Lower leg skin (tissue), 4 donors: ENCODE measurements at regions of chr7 and their contacts with region 1.

Region 1: GRCh38 chr7:22559829-22560489 is 60.0 kb upstream of the STEAP1B start:
- DNase-seq: peak in 1 of 2 donors; percentile 67
- H3K4me3 ChIP-seq: no peak overlapping the region
- CTCF ChIP-seq: peak in 1 of 3 donors; percentile 88
- POLR2A ChIP-seq: no peak

Region 2: GRCh38 chr7:22726345-22727185 is 166.6 kb after region 1 on chr7:
- intact Hi-C with region 1: loop called (anchors 10 kb)
- DNase-seq: peak; percentile 48 to 89
- H3K4me3 ChIP-seq: no peak overlapping the region
- CTCF ChIP-seq: no peak
- POLR2A ChIP-seq: no peak

Region 3: DNA sequence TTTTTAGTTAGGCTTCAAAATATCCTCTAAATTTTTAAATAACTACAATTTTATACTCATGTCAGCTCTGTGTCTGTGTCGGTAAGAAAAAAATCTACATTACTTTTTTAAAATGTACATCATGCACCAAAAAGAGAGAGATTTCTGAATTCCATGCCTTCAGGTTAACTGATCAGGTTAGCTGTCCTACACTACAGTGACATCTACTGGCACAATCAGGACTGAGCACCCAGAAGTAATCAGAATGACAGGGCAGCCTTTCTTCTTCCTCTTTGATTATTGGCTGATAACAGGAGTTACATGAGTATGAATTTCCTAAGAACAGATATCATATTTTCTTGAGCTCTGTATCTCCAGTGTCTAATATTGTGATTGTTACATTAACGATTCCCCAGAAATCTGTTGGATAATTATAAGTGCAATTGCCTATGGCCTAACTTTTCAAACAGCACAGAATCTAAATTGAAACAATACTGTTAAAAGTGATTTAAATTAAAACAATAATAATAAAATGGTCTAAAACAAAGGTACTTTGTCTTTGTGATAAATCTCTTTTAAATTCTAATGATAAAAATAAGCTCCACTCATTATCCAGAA is 495.7 kb after region 1 on chr7:
- intact Hi-C with region 1: loop called (anchors 10 kb)
- DNase-seq: peak in 1 of 2 donors; percentile 46
- H3K4me3 ChIP-seq: no peak overlapping the region
- CTCF ChIP-seq: no peak
- POLR2A ChIP-seq: no peak

Region 4: DNA sequence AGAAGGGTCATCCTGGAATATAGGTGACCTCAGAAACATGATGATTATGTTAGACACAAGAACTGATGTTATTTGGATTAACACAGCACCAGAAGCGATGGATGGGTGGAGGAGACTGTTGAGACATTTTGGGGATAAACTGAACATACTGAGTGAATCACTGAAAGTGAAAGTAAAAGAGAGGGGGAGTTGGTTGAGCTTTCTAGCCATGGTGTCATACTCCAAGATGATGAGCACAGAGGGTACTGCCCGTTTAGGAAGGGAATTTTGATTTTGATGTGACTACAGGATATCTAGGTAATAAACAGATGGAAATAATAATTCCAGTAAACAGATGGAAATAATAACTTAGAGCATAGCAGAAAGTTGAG is 1476.1 kb after region 1 on chr7:
- intact Hi-C with region 1: no loop called
- DNase-seq: no peak
- H3K4me3 ChIP-seq: no peak overlapping the region
- CTCF ChIP-seq: no peak
- POLR2A ChIP-seq: no peak